ENCODE measurements at regions of chr13 and their contacts with region 1.

Region 1: DNA sequence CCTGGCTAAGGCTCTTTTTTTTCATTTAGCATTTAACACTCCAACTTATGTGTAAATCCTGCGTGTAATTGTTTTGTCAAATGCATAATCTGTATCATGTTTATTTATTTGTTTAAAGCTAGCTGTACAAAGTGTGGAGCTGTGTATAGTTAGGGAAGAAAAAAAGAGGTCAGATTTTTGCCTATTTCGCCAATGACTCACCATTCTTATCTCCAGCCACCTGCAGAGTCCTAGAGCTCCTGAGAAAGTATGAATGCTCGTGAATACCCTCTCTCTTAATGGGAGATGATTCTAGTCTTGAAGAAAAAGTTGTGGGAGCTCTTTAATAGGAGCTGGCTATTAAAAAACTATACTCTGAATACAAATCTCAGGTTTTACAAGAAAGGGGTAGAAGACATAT is 778.8 kb upstream of the SLITRK5 start:
- DNase-seq: no peak
- H3K4me3 ChIP-seq: no peak overlapping the region
- H3K27ac ChIP-seq: no peak overlapping the region
- H3K4me1 ChIP-seq: no peaks in the 10 kb centered on the region
- CTCF ChIP-seq: no peak

Region 2: GRCh38 chr13:86313421-86313820 is 578.9 kb before region 1 on chr13:
- CTCF ChIA-PET with region 1: no interaction called
- POLR2A ChIA-PET with region 1: no interaction called
- intact Hi-C with region 1: no loop called
- DNase-seq: no peak
- H3K4me3 ChIP-seq: no peak overlapping the region
- H3K27ac ChIP-seq: no peak overlapping the region
- H3K4me1 ChIP-seq: no peaks in the 10 kb centered on the region
- CTCF ChIP-seq: no peak

Region 3: GRCh38 chr13:86920960-86921359 is 28.6 kb after region 1 on chr13:
- CTCF ChIA-PET with region 1: no interaction called
- POLR2A ChIA-PET with region 1: interaction called, 3 read pairs
- intact Hi-C with region 1: loop called (anchors 1 kb)
- DNase-seq: no peak
- H3K4me3 ChIP-seq: no peak overlapping the region
- H3K27ac ChIP-seq: no peak overlapping the region
- H3K4me1 ChIP-seq: no peaks in the 10 kb centered on the region
- CTCF ChIP-seq: no peak

Region 4: DNA sequence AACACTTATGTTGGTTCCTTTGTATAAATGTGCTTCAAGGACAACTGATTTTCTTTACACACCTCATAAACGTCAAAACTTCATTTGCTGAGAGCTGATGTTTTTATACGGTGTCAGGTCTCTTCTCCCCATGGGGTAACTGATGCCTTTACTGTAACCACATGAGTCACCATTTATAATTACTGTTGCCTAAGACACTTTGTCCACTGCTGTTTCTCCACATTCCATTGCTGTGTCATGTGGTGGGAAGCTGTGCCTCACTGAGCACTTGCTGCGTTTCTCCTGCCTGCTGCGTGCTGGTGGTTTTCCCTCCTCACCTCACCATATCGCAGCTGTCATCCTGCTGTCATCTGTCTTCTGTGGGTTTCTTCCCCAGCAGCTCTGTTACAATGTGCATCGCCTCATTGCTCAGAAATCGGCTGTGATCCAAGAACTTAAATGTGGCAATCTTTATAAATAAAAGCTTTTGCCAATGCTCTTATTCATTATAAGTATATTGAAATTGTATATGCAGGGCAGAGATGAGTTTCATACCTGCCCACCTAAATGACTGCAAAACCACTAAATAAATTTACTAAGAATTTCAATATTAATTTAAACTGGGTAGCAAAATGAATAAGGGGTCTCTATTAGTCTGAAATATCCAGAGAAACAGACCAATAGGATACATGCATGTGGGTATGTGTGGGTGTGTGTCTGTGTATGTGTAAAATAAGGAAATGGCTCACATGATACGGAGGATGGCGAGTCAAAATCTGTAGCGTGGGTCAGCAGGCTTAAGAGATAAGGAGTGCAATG is 231.9 kb after region 1 on chr13:
- CTCF ChIA-PET with region 1: no interaction called
- POLR2A ChIA-PET with region 1: no interaction called
- intact Hi-C with region 1: no loop called
- DNase-seq: no peak
- H3K4me3 ChIP-seq: no peak overlapping the region
- H3K27ac ChIP-seq: no peak overlapping the region
- H3K4me1 ChIP-seq: no peaks in the 10 kb centered on the region
- CTCF ChIP-seq: no peak

Region 5: DNA sequence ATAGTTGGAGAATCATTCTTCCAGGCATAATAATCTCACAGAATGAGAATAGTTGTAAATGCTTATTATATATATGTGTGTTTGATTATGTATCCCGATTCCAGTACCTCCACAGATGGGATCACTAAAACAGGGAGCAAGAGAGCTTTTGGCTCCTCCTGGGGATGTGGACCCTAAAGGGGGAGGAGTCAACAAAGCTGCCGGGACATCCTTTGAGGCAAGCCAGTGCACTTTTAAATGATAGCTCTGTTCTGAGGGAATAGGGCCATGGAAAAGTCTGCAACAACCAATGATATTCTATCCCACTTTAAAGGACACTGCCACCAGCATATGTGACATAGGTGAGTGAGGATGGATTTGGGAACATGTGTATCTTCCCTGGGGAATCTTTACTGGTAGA is 819.7 kb after region 1 on chr13:
- CTCF ChIA-PET with region 1: no interaction called
- POLR2A ChIA-PET with region 1: no interaction called
- intact Hi-C with region 1: no loop called
- DNase-seq: no peak
- H3K4me3 ChIP-seq: no peak overlapping the region
- H3K27ac ChIP-seq: no peak overlapping the region
- H3K4me1 ChIP-seq: no peaks in the 10 kb centered on the region
- CTCF ChIP-seq: no peak